HCT116 (cell line): ENCODE measurements at regions of chr11 and their contacts with region 1.

Region 1: DNA sequence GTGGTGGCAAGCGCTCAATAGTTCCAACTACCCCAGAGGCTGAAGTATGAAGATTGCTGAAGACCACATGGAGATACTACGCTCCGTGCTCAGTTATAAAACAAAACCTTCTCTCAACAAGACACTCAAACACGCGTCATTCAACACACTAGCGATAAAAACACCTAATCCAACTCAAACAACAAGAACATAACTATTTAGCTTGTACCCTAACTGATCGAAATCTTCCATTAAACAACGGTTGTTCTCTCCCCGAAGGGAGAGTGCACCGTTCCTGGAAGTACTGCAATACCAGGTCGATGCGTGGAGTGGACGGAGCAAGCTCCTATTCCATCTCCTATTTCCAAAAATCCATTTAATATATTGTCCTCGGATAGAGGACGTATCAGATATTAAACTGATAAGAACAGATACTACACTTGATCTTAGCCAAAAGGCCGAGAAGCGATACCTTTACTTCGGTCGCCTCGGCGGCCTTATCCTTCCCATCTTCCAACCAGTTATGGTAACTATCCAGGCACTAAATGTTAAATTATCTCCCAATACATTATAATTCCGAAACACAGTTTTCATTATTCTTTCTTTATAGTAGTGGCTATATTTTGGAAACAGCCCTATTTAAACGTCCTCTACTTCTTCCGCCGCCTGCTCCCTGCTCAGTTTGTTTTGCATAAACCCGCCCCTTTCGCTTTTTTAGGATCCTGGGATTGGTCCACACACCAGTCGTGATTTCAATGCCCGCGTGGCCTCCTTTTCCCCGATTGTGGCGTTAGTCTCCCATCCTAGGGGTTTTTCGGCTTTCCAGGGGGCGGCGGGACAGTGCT is 2.2 kb upstream of the WDR74 start:
- DNase-seq: peak; percentile 99
- ATAC-seq: peak; percentile 79
- H3K4me3 ChIP-seq: peak overlapping the region in 1 of 2 experiments; percentile 15; a peak in 2 of 4 replicates
- H3K27ac ChIP-seq: peak overlapping the region; percentile 94
- H3K4me1 ChIP-seq: peaks cover 8 to 36% of the 10 kb centered on the region in 2 experiments; a peak in 3 of 4 replicates
- H3K27me3 ChIP-seq: no peaks in the 10 kb centered on the region
- CTCF ChIP-seq: no peak
- POLR2A ChIP-seq: peak; percentile 100
- RAD21 ChIP-seq: no peak

Region 2: GRCh38 chr11:62665075-62665598 is 176.4 kb before region 1 on chr11 and contains the starts of genes C11orf98 and CSKMT:
- CTCF ChIA-PET with region 1: no interaction called
- POLR2A ChIA-PET with region 1: interaction called, 28 read pairs
- RAD21 ChIA-PET with region 1: no interaction called
- intact Hi-C with region 1: no loop called
- DNase-seq: peak; percentile 84
- ATAC-seq: peak; percentile 81
- H3K4me3 ChIP-seq: peak within 1 kb of the TSS; percentile 99
- H3K27ac ChIP-seq: peak within 1 kb of the TSS; percentile 96
- H3K4me1 ChIP-seq: peaks cover 24 to 43% of the 10 kb centered on the region in 2 experiments; a peak in 3 of 4 replicates
- H3K27me3 ChIP-seq: no peaks in the 10 kb centered on the region
- CTCF ChIP-seq: no peak
- POLR2A ChIP-seq: peak; percentile 99
- RAD21 ChIP-seq: no peak
- total RNA-seq, gene C11orf98: 121 TPM
- total RNA-seq, gene CSKMT: 63.5 TPM

Region 3: DNA sequence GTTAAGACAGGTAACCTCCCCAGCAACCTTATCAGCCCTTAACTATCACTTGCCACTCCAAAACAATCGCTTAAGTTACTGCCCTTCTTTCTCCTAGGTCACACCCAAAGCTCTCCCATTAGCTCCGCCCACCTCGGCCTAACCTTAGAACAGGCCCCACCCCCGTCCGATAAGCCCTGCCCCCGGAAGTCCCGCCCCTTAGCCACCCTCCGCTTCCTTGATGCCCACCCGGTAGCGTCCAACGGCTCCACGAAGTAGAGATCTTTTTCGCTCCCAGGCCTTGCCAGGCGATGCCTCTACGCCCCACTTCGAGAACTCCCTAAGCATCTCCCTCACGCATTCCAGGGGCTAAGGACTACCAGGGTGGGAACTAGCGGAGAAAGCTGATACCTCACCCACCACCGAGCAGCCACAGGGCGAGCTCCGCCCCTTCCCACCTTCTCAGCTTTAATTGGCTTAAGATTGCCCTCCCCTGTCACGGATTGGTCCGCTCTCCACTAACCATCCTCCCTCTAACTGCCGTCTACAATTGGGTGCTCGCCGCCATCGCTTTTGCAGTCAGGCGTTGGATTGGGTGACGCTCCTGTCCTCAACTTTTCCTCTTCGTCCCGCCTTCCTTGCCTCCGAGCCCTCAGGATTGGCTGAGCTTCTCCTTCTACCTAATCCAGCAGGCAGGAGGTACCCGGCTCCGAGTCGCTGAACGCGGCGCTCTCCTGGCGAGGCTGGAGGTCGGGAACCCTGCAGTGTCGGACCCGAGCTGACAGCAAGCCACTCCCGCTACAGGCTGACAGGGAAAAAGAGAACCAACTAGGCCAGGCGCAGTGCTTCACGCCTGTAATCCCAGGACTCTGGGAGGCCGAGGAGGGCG is 87.6 kb before region 1 on chr11 and contains the start of gene ZBTB3:
- CTCF ChIA-PET with region 1: no interaction called
- POLR2A ChIA-PET with region 1: interaction called, 50 read pairs
- RAD21 ChIA-PET with region 1: no interaction called
- intact Hi-C with region 1: no loop called
- DNase-seq: peak; percentile 99
- ATAC-seq: peak; percentile 96
- H3K4me3 ChIP-seq: peak within 1 kb of the TSS; percentile 70 to 84
- H3K27ac ChIP-seq: peak within 1 kb of the TSS; percentile 76
- H3K4me1 ChIP-seq: peaks cover 4 to 18% of the 10 kb centered on the region in 2 experiments; a peak in 3 of 4 replicates
- H3K27me3 ChIP-seq: no peaks in the 10 kb centered on the region
- CTCF ChIP-seq: no peak
- POLR2A ChIP-seq: peak; percentile 86
- RAD21 ChIP-seq: no peak
- total RNA-seq, gene ZBTB3: 11.3 TPM

Region 4: GRCh38 chr11:62805076-62805892 is 36.3 kb before region 1 on chr11 and contains the start of gene NXF1:
- CTCF ChIA-PET with region 1: no interaction called
- POLR2A ChIA-PET with region 1: interaction called, 26 read pairs
- RAD21 ChIA-PET with region 1: no interaction called
- intact Hi-C with region 1: no loop called
- DNase-seq: peak; percentile 90
- ATAC-seq: peak; percentile 91
- H3K4me3 ChIP-seq: peak within 1 kb of the TSS; percentile 68 to 79
- H3K27ac ChIP-seq: peak within 1 kb of the TSS; percentile 85
- H3K4me1 ChIP-seq: peaks cover 0 to 21% of the 10 kb centered on the region in 2 experiments; a peak in 3 of 4 replicates
- H3K27me3 ChIP-seq: no peaks in the 10 kb centered on the region
- CTCF ChIP-seq: no peak
- POLR2A ChIP-seq: peak; percentile 99
- RAD21 ChIP-seq: no peak
- total RNA-seq, gene NXF1: 55.5 TPM

Region 5: GRCh38 chr11:62875698-62876478 is 34.3 kb after region 1 on chr11:
- CTCF ChIA-PET with region 1: interaction called, 3 read pairs
- POLR2A ChIA-PET with region 1: interaction called, 50 read pairs
- RAD21 ChIA-PET with region 1: interaction called in 1 of 2 experiments, 7 read pairs
- intact Hi-C with region 1: no loop called
- DNase-seq: no peak
- ATAC-seq: no peak
- H3K4me3 ChIP-seq: no peak overlapping the region
- H3K27ac ChIP-seq: peak overlapping the region; percentile 26
- H3K4me1 ChIP-seq: peaks cover 18 to 35% of the 10 kb centered on the region in 2 experiments
- H3K27me3 ChIP-seq: no peaks in the 10 kb centered on the region
- CTCF ChIP-seq: no peak
- POLR2A ChIP-seq: no peak
- RAD21 ChIP-seq: no peak